Lower leg skin (tissue), 4 donors: ENCODE measurements at regions of chr1 and their contacts with region 1.

Region 1: GRCh38 chr1:41416552-41417334 is 55.5 kb downstream of the FOXO6 start:
- DNase-seq: peak in 1 of 2 donors; percentile 92
- H3K4me3 ChIP-seq: no peak overlapping the region
- CTCF ChIP-seq: peak in 1 of 3 donors; percentile 78
- POLR2A ChIP-seq: no peak

Region 2: GRCh38 chr1:41268154-41268770 is 148.5 kb before region 1 on chr1:
- intact Hi-C with region 1: loop called (anchors 5 kb)
- DNase-seq: peak; percentile 72 to 95
- H3K4me3 ChIP-seq: no peak overlapping the region
- CTCF ChIP-seq: peak in 1 of 3 donors; percentile 97
- POLR2A ChIP-seq: no peak

Region 3: DNA sequence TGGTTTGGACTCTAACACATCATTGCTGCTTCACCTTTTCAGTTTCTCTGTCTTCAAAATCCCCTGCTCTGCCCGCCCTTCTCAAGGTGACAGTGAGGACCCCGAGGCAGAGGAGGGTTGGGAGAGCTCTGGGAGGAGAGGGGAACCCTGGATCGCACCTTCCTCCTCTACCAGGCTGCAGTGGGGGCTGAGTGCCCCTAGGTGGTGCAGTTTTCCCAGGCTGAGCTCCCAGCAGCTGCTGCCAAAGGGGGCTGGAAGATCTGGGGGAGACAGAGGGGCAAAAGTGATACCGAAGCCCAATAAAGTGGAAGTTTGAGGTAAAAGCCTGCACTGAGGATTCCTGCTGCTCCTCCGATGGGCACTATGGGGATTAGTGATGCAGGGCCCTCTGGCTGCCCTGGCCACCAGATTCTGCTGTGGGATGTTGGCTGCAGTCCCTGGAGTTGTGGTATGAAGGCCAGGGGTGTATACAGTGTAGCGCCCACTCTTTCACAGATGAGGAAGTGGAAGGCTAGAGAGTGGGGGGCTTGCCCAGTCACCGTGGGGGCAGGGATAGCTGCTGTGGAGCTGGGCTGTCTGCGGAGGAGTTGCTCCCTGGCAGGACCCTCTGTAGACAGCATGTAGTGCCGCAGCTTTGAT is 133.9 kb before region 1 on chr1:
- intact Hi-C with region 1: loop called (anchors 5 kb)
- DNase-seq: no peak
- H3K4me3 ChIP-seq: no peak overlapping the region
- CTCF ChIP-seq: no peak
- POLR2A ChIP-seq: no peak